B cell (primary cell): ENCODE measurements at regions of chr14 and their contacts with region 1.

Region 1: DNA sequence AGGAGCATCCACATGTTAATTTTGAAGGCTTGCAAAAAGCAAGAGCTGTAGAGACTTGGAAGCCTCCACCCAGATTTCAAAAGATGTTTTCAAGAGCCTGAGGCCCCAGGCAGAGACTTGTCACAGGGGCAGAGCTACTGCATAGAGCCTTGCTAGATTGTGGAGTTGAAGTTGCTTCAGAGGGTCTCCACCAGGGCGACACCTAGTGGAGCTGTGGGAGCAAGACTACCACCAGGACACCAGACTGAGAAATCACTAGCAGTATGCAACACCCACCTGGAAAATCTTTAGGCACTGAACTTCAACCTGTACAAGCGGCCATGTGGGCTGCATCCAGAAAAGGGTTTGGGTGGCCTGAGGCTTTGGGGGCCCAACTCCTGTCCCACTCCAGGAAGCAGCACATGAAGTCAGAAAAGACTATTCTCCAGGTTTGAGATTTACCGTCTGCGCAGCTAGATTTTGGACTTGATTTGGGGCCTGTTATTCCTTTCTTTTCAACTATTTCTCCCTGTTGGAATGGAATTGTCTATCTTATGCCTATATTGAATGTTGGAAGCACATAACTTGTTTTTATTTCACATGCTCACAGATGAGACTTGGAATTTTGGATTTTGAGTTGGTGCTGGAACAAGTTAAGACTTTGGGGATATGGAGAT is 508.6 kb downstream of the FLRT2 start:
- DNase-seq: peak; percentile 25
- ATAC-seq: peak; percentile 39
- H3K4me3 ChIP-seq: no peak overlapping the region
- H3K4me3 Mint-ChIP-seq: no peak overlapping the region
- H3K27ac ChIP-seq: no peak overlapping the region
- H3K27ac Mint-ChIP-seq: no peak overlapping the region
- H3K4me1 ChIP-seq: no peaks in the 10 kb centered on the region
- H3K4me1 Mint-ChIP-seq: no peaks in the 10 kb centered on the region
- H3K27me3 ChIP-seq: no peaks in the 10 kb centered on the region
- H3K27me3 Mint-ChIP-seq: no peaks in the 10 kb centered on the region
- CTCF ChIP-seq: peak; percentile 64

Region 2: DNA sequence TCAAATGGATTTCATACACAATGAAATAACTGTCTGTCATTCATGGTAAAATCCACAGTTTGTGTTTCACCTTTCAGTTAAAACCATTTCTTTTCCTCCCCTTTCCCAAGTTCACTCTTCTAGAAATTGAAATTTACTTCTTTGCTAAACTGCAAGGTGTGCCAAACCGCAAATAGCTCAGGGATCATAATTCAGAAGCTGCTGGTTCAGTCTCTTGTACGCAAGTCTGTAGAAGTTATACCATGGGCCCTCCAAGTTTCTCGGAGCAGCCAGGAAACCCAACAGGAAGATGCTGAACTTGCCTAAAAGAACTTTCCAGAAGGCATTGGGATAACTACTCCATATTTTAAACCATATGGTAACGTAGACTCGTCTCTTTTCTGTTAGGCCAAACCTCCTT is 239.7 kb before region 1 on chr14:
- CTCF ChIA-PET with region 1: no interaction called
- POLR2A ChIA-PET with region 1: no interaction called
- intact Hi-C with region 1: no loop called
- DNase-seq: no peak
- ATAC-seq: no peak
- H3K4me3 ChIP-seq: no peak overlapping the region
- H3K4me3 Mint-ChIP-seq: no peak overlapping the region
- H3K27ac ChIP-seq: no peak overlapping the region
- H3K27ac Mint-ChIP-seq: no peak overlapping the region
- H3K4me1 ChIP-seq: no peaks in the 10 kb centered on the region
- H3K4me1 Mint-ChIP-seq: no peaks in the 10 kb centered on the region
- H3K27me3 ChIP-seq: no peaks in the 10 kb centered on the region
- H3K27me3 Mint-ChIP-seq: no peaks in the 10 kb centered on the region
- CTCF ChIP-seq: no peak

Region 3: GRCh38 chr14:85856430-85856829 is 182.1 kb before region 1 on chr14:
- CTCF ChIA-PET with region 1: no interaction called
- POLR2A ChIA-PET with region 1: no interaction called
- intact Hi-C with region 1: loop called (anchors 5 kb)
- DNase-seq: no peak
- ATAC-seq: no peak
- H3K4me3 ChIP-seq: no peak overlapping the region
- H3K4me3 Mint-ChIP-seq: no peak overlapping the region
- H3K27ac ChIP-seq: no peak overlapping the region
- H3K27ac Mint-ChIP-seq: no peak overlapping the region
- H3K4me1 ChIP-seq: no peaks in the 10 kb centered on the region
- H3K4me1 Mint-ChIP-seq: no peaks in the 10 kb centered on the region
- H3K27me3 ChIP-seq: no peaks in the 10 kb centered on the region
- H3K27me3 Mint-ChIP-seq: no peaks in the 10 kb centered on the region
- CTCF ChIP-seq: peak; percentile 9